ENCODE measurements at regions of chr10 and their contacts with region 1.

Region 1: GRCh38 chr10:58479045-58479444 is 33.6 kb upstream of the BICC1 start:
- DNase-seq: no peak
- H3K4me3 ChIP-seq: no peak overlapping the region
- H3K4me3 Mint-ChIP-seq: no peak overlapping the region
- H3K27ac Mint-ChIP-seq: no peak overlapping the region
- H3K4me1 ChIP-seq: peaks cover 12% of the 10 kb centered on the region
- H3K4me1 Mint-ChIP-seq: peaks cover 30% of the 10 kb centered on the region
- H3K27me3 ChIP-seq: no peaks in the 10 kb centered on the region
- H3K27me3 Mint-ChIP-seq: no peaks in the 10 kb centered on the region
- CTCF ChIP-seq: no peak

Region 2: GRCh38 chr10:58691528-58691927 is 212.5 kb after region 1 on chr10:
- CTCF ChIA-PET with region 1: no interaction called
- POLR2A ChIA-PET with region 1: interaction called, 10 read pairs
- intact Hi-C with region 1: no loop called
- DNase-seq: no peak
- H3K4me3 ChIP-seq: no peak overlapping the region
- H3K4me3 Mint-ChIP-seq: no peak overlapping the region
- H3K27ac Mint-ChIP-seq: no peak overlapping the region
- H3K4me1 ChIP-seq: no peaks in the 10 kb centered on the region
- H3K4me1 Mint-ChIP-seq: peaks cover 8% of the 10 kb centered on the region
- H3K27me3 ChIP-seq: no peaks in the 10 kb centered on the region
- H3K27me3 Mint-ChIP-seq: no peaks in the 10 kb centered on the region
- CTCF ChIP-seq: no peak